Transverse colon (tissue), 4 donors: ENCODE measurements at regions of chr4 and their contacts with region 1.

Region 1: DNA sequence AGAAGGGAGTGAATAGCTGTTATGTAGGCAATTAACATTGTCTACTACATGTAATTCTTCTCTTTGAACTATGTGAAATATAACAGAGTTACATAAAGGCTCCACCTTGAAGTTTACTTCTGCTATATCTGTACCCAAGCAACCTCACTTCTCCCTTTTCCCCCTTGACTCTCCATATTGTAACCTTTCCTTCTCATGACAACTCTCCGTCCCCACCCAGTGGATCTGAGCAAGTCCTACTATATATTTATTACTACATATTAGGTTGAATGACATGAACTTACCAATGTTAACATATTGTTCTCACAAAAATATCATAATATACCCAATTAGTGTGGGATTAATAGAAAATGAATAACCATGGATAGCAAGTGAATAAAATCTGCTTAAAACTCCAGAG is 93.2 kb upstream of the ATP8A1 start:
- DNase-seq: no peak
- H3K4me3 ChIP-seq: no peak overlapping the region
- H3K27ac ChIP-seq: no peak overlapping the region
- H3K4me1 ChIP-seq: no peaks in the 10 kb centered on the region
- H3K27me3 ChIP-seq: no peaks in the 10 kb centered on the region
- CTCF ChIP-seq: peak in 1 of 5 experiments; percentile 13
- EP300 ChIP-seq: no peak
- POLR2A ChIP-seq: no peak

Region 2: DNA sequence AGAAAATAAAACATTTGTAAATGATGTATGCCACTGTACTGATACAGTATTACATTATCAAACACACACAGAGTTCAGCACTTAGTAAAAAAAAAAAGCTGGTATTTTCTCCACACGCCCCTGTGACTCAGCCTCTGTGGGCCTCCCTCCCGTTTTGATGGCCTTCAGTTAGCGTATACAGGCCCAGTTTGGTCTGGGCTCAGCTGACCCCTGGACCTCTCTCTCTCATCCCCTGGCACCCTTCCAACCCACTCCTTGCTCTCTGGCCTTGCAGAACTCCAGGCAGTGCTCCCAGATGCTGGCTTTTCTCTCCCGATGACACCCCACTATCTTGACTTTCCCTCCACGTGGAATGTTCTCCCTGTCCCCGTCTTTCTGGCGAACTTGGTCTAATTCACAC is 1301.2 kb before region 1 on chr4:
- in situ Hi-C with region 1: no loop called
- intact Hi-C with region 1: no loop called
- DNase-seq: peak; percentile 9
- H3K4me3 ChIP-seq: no peak overlapping the region
- H3K27ac ChIP-seq: no peak overlapping the region
- H3K4me1 ChIP-seq: no peaks in the 10 kb centered on the region
- H3K27me3 ChIP-seq: no peaks in the 10 kb centered on the region
- CTCF ChIP-seq: no peak
- EP300 ChIP-seq: no peak
- POLR2A ChIP-seq: no peak

Region 3: DNA sequence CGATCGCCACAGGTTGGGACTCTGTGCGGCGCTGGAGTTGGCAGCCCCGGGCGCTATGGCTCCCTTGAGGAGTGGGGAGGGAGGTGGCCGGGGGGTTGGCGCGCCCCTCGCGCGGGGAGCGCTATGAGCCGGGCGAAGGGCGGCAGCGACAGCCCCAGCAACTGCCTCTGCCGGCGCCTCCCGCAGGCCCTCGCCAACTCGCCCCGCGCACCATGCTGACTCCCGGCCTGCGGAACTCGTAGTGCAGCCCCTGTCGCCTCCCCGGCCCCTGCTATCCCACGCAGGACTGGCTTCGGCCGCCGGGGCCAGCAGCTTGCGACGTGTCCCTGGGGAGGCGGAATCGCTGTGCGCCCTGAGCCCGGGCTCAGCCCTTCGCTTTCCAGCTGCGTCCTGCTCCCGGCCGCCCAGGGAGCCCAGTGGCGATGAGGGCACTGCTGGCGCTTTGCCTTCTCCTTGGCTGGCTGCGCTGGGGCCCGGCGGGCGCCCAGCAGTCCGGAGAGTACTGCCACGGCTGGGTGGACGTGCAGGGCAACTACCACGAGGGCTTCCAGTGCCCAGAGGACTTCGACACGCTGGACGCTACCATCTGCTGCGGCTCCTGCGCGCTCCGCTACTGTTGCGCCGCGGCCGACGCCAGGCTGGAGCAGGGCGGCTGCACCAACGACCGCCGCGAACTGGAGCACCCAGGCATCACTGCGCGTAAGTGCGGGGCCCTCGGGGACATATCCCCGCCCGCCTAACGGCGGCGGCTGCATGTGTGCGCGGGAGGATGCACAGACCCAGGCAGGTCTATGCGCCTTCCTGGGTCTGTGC is 352.2 kb before region 1 on chr4:
- in situ Hi-C with region 1: no loop called
- intact Hi-C with region 1: no loop called
- DNase-seq: no peak
- H3K4me3 ChIP-seq: peak overlapping the region; percentile 26 to 61 (median 34)
- H3K27ac ChIP-seq: peak overlapping the region in 1 of 4 donors; percentile 37
- H3K4me1 ChIP-seq: peaks cover 3 to 31% (median 28%) of the 10 kb centered on the region in 4 donors
- H3K27me3 ChIP-seq: peaks cover 86% of the 10 kb centered on the region
- CTCF ChIP-seq: no peak
- EP300 ChIP-seq: no peak
- POLR2A ChIP-seq: no peak

Region 4: GRCh38 chr4:42568610-42569207 is 181.4 kb before region 1 on chr4:
- in situ Hi-C with region 1: loop called in 2 of 4 experiments (anchors 10 to 25 kb)
- intact Hi-C with region 1: no loop called
- DNase-seq: peak; percentile 72
- H3K4me3 ChIP-seq: no peak overlapping the region
- H3K27ac ChIP-seq: no peak overlapping the region
- H3K4me1 ChIP-seq: peaks cover 0 to 3% (median 1%) of the 10 kb centered on the region in 4 donors
- H3K27me3 ChIP-seq: no peaks in the 10 kb centered on the region
- CTCF ChIP-seq: peak; percentile 62 to 73 (median 68)
- EP300 ChIP-seq: no peak
- POLR2A ChIP-seq: no peak